Spleen (tissue), 13 donors: ENCODE measurements at regions of chr10 and their contacts with region 1.

Region 1: DNA sequence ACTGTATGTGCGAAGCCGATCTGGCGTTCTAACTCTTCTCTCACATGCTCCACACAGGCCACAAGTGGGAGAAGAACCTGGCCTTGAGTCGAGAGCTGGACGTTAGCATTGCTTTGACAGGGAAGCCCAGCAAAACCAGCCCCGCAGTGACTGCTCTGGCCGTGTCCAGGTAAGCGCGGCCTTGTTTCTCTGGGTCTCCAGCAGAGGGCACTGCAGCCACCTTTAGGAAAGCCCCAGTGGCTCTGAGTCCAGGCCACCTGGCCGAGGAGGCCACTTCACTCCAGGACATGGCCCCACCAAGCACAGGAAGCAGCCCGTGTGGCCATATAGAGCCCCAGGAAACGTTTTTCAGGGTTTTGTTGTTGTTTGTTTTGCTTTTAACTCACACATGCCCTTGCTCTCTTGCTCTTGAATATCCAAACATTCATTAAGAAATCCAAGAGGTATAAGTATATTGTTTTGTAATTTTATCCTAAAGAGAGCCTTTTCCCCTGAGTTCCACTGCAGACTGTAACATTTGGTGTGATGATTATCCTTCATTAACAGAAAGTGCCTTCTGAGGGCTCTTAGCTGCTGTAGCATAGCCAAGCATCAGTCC is 41.8 kb upstream of the LRRC18 start:
- DNase-seq: peak; percentile 85
- H3K4me3 ChIP-seq: no peak overlapping the region
- H3K27ac ChIP-seq: no peak overlapping the region
- H3K4me1 ChIP-seq: peaks cover 0 to 8% (median 7%) of the 10 kb centered on the region in 6 donors
- H3K27me3 ChIP-seq: no peaks in the 10 kb centered on the region
- CTCF ChIP-seq: peak; percentile 41 to 82 (median 73)
- POLR2A ChIP-seq: no peak

Region 2: GRCh38 chr10:49164559-49165188 is 183.3 kb after region 1 on chr10:
- intact Hi-C with region 1: loop called (anchors 5 kb)
- DNase-seq: peak; percentile 80
- H3K4me3 ChIP-seq: no peak overlapping the region
- H3K27ac ChIP-seq: no peak overlapping the region
- H3K4me1 ChIP-seq: peaks cover 0 to 14% (median 2%) of the 10 kb centered on the region in 6 donors
- H3K27me3 ChIP-seq: no peaks in the 10 kb centered on the region
- CTCF ChIP-seq: peak; percentile 16 to 76 (median 67)
- POLR2A ChIP-seq: no peak

Region 3: DNA sequence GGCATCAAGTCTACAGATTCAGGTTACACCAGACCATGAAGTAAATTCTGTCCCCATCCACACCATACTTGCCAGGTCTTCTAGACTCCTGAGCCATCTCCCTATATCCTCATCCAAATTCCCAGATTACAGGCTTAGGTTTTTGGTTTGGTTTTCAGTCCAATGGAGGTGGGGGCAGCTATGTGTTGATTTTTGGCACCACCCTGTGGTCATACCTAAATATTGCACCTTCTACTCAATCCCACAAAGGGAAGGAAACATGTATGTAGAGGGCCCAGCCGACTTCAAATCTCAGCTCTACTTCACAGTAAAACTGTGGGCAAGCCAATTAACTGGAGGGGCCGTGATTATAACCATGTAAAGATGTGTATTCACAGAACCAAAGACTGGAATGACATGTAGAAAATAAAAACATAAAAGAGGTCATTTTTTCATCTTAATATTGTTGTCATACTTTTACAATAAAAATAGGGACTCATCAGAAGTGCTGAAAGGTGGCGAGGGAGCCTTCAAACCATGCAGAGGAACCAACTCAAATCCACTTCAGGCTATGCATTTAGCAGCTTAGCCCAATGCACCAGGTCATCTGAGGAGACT is 537.7 kb after region 1 on chr10:
- intact Hi-C with region 1: loop called (anchors 5 kb)
- DNase-seq: no peak
- H3K4me3 ChIP-seq: no peak overlapping the region
- H3K27ac ChIP-seq: no peak overlapping the region
- H3K4me1 ChIP-seq: peaks cover 0 to 10% (median 2%) of the 10 kb centered on the region in 6 donors
- H3K27me3 ChIP-seq: no peaks in the 10 kb centered on the region
- CTCF ChIP-seq: peak; percentile 34 to 82 (median 64)
- POLR2A ChIP-seq: no peak